ENCODE measurements at regions of chr17 and their contacts with region 1.

Region 1: GRCh38 chr17:21511363-21512198 is 135.4 kb downstream of the KCNJ12 start:
- DNase-seq: peak; percentile 82 to 86
- ATAC-seq: peak; percentile 93 to 98 (median 96)
- H3K4me3 ChIP-seq: peak overlapping the region; percentile 38 to 69 (median 62)
- H3K27ac ChIP-seq: peak overlapping the region in 9 of 10 donors; percentile 21 to 81 (median 60)
- H3K4me1 ChIP-seq: peaks cover 0 to 20% (median 4%) of the 10 kb centered on the region in 9 donors
- H3K27me3 ChIP-seq: peaks cover 0 to 21% (median 0%) of the 10 kb centered on the region in 7 donors
- CTCF ChIP-seq: peak; percentile 71 to 94 (median 85)

Region 2: GRCh38 chr17:21119247-21119918 is 392.2 kb before region 1 on chr17:
- intact Hi-C with region 1: loop called in 6 of 10 experiments (anchors 5 to 10 kb)
- DNase-seq: peak; percentile 45 to 76
- ATAC-seq: peak; percentile 67 to 93 (median 78)
- H3K4me3 ChIP-seq: peak overlapping the region in 3 of 10 donors; percentile 8 to 23 (median 17)
- H3K27ac ChIP-seq: peak overlapping the region in 5 of 10 donors; percentile 10 to 55 (median 21)
- H3K4me1 ChIP-seq: peaks cover 0 to 22% (median 7%) of the 10 kb centered on the region in 9 donors
- H3K27me3 ChIP-seq: peaks cover 0 to 4% (median 0%) of the 10 kb centered on the region in 7 donors
- CTCF ChIP-seq: peak; percentile 63 to 87 (median 83)

Region 3: GRCh38 chr17:21214015-21214776 is 297.4 kb before region 1 on chr17 and contains the start of gene TMEM11:
- intact Hi-C with region 1: no loop called
- DNase-seq: peak; percentile 95 to 97
- ATAC-seq: peak; percentile 94 to 98 (median 96)
- H3K4me3 ChIP-seq: peak within 1 kb of the TSS; percentile 81 to 100 (median 95)
- H3K27ac ChIP-seq: peak within 1 kb of the TSS; percentile 83 to 99 (median 95)
- H3K4me1 ChIP-seq: peaks cover 36 to 64% (median 55%) of the 10 kb centered on the region in 9 donors
- H3K27me3 ChIP-seq: no peaks in the 10 kb centered on the region
- CTCF ChIP-seq: peak in 4 of 9 donors; percentile 8 to 48 (median 33)
- total RNA-seq, gene TMEM11: 20.8 to 37.2 (median 27.6) TPM

Region 4: DNA sequence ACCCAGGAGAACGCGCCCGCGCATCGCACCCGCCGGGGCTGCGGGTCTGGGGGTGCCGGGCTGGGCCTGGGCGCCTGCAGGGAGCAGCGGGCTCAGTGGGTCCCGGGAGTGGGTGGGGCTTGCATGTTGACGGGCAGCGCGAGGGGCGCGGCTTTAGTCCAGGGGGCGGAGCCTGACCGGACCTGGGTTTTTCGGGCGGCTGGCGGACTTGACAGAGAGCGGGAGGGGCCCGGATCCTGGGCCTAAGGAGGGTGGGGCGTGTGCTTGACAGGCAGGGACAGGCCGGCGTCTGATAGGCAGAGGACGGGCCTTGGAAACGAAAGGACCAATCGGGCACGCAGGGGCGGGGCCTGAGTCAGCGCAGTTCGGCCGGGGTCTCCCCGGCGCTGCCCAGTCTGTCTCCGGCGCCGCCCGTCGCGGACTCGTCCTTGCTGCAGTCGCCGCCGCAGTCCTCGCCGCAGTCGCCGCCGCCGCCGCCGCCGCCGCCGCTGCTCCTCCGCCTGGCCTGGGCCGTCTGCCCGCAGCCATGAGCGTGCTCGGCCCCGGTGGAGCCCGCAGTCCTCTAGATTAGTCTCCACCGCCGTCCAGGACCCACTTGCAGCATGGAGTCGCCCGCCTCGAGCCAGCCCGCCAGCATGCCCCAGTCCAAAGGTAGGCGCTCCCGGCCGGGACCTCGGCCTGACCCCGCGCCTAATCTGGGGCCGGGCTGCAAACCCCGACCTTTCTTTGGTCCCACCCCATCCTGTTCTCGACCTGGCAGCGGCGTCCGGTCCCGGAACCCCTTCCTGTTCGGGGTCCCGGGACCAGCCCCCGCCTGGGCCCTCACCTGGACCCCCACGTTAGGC is 227.0 kb before region 1 on chr17 and contains the start of gene MAP2K3:
- intact Hi-C with region 1: loop called in 9 of 10 experiments (anchors 1 to 10 kb)
- DNase-seq: peak; percentile 99
- ATAC-seq: peak; percentile 79 to 91 (median 86)
- H3K4me3 ChIP-seq: peak within 1 kb of the TSS; percentile 67 to 99 (median 97)
- H3K27ac ChIP-seq: peak within 1 kb of the TSS; percentile 83 to 99 (median 96)
- H3K4me1 ChIP-seq: peaks cover 35 to 71% (median 49%) of the 10 kb centered on the region in 9 donors
- H3K27me3 ChIP-seq: no peaks in the 10 kb centered on the region
- CTCF ChIP-seq: peak in 1 of 9 donors; percentile 0
- total RNA-seq, gene MAP2K3: 28.9 to 71.6 (median 60.4) TPM

Region 5: GRCh38 chr17:21564262-21564661 is 52.7 kb after region 1 on chr17:
- intact Hi-C with region 1: no loop called
- DNase-seq: no peak
- ATAC-seq: no peak
- H3K4me3 ChIP-seq: no peak overlapping the region
- H3K27ac ChIP-seq: no peak overlapping the region
- H3K4me1 ChIP-seq: no peaks in the 10 kb centered on the region
- H3K27me3 ChIP-seq: peaks cover 0 to 5% (median 0%) of the 10 kb centered on the region in 7 donors
- CTCF ChIP-seq: no peak

Region 6: GRCh38 chr17:21678393-21679081 is 167.0 kb after region 1 on chr17:
- intact Hi-C with region 1: no loop called
- DNase-seq: no peak
- ATAC-seq: peak in 1 of 8 donors; percentile 31
- H3K4me3 ChIP-seq: no peak overlapping the region
- H3K27ac ChIP-seq: no peak overlapping the region
- H3K4me1 ChIP-seq: no peaks in the 10 kb centered on the region
- H3K27me3 ChIP-seq: peaks cover 0 to 38% (median 5%) of the 10 kb centered on the region in 7 donors
- CTCF ChIP-seq: no peak

Region 7: GRCh38 chr17:21689604-21690003 is 178.0 kb after region 1 on chr17:
- intact Hi-C with region 1: no loop called
- DNase-seq: no peak
- ATAC-seq: peak in 6 of 8 donors; percentile 48 to 66 (median 56)
- H3K4me3 ChIP-seq: no peak overlapping the region
- H3K27ac ChIP-seq: no peak overlapping the region
- H3K4me1 ChIP-seq: no peaks in the 10 kb centered on the region
- H3K27me3 ChIP-seq: peaks cover 0 to 6% (median 0%) of the 10 kb centered on the region in 7 donors
- CTCF ChIP-seq: no peak